ENCODE measurements at regions of chr1 and their contacts with region 1.

Region 1: DNA sequence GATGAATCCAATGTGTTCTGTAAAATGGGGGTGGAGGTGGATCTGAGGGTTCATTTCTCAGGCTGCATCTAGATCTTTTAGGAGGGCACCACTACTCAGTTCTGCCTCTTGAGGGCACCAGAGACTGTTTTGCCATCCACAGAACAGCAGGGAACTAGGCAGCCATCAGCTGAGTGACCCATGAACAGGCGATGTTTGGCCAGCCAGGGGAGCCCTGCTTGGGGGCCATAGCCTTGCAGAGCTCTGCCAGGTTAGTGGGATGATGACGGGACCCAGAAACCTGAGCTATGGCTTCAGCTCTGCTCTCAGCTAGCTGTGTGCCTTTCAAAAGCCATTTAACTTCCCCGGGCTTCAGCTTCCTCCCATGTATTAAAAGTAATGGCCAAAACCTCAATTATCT is 13.4 kb upstream of the NOS1AP start:
- DNase-seq: peak; percentile 67
- ATAC-seq: peak; percentile 93
- H3K4me3 ChIP-seq: no peak overlapping the region
- H3K27ac ChIP-seq: no peak overlapping the region
- H3K4me1 ChIP-seq: peaks cover 3% of the 10 kb centered on the region; the same call in 1 of the 2 replicates
- H3K27me3 ChIP-seq: peaks cover 9% of the 10 kb centered on the region
- CTCF ChIP-seq: peak; percentile 89
- POLR2A ChIP-seq: no peak
- RAD21 ChIP-seq: peak; percentile 90

Region 2: GRCh38 chr1:162258394-162258793 is 202.4 kb after region 1 on chr1:
- CTCF ChIA-PET with region 1: no interaction called
- POLR2A ChIA-PET with region 1: no interaction called
- dilution Hi-C with region 1: no loop called
- in situ Hi-C with region 1: no loop called
- intact Hi-C with region 1: no loop called
- DNase-seq: no peak
- ATAC-seq: no peak
- H3K4me3 ChIP-seq: no peak overlapping the region
- H3K27ac ChIP-seq: no peak overlapping the region
- H3K4me1 ChIP-seq: no peaks in the 10 kb centered on the region
- H3K27me3 ChIP-seq: no peaks in the 10 kb centered on the region; the same call in 1 of the 2 replicates
- CTCF ChIP-seq: no peak
- POLR2A ChIP-seq: no peak
- RAD21 ChIP-seq: no peak

Region 3: DNA sequence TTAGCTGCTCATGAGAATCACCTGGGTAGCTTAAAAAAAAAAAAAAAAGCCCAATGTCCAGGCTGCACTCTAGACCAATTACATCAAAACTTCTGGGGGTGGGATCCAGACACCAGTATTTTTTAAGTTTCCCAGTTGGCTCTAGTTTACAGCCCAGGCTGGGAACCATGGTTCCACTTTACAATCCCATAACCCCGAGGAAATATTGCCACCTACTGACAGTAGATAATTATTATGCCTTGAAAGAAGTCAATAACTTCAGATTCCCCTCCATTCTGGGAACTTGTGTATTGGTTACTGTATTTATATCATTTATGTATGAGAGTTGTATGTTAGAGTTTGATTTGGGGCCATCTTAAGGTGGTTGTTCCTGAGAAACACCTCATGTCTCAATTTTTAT is 220.4 kb after region 1 on chr1:
- CTCF ChIA-PET with region 1: interaction called, 5 read pairs
- POLR2A ChIA-PET with region 1: no interaction called
- dilution Hi-C with region 1: no loop called
- in situ Hi-C with region 1: loop called (anchors 5 kb)
- intact Hi-C with region 1: loop called (anchors 1 kb)
- DNase-seq: peak; percentile 25
- ATAC-seq: peak; percentile 82
- H3K4me3 ChIP-seq: no peak overlapping the region
- H3K27ac ChIP-seq: no peak overlapping the region
- H3K4me1 ChIP-seq: no peaks in the 10 kb centered on the region
- H3K27me3 ChIP-seq: peaks cover 10% of the 10 kb centered on the region
- CTCF ChIP-seq: peak; percentile 55
- POLR2A ChIP-seq: no peak
- RAD21 ChIP-seq: peak; percentile 56

Region 4: GRCh38 chr1:162391790-162392563 is 335.9 kb after region 1 on chr1:
- CTCF ChIA-PET with region 1: interaction called, 18 read pairs
- POLR2A ChIA-PET with region 1: no interaction called
- dilution Hi-C with region 1: no loop called
- in situ Hi-C with region 1: loop called (anchors 5 kb)
- intact Hi-C with region 1: loop called (anchors 1 kb)
- DNase-seq: peak; percentile 58
- ATAC-seq: peak; percentile 93
- H3K4me3 ChIP-seq: no peak overlapping the region
- H3K27ac ChIP-seq: no peak overlapping the region
- H3K4me1 ChIP-seq: no peaks in the 10 kb centered on the region
- H3K27me3 ChIP-seq: peaks cover 27% of the 10 kb centered on the region
- CTCF ChIP-seq: peak; percentile 77
- POLR2A ChIP-seq: no peak
- RAD21 ChIP-seq: peak; percentile 70

Region 5: GRCh38 chr1:162497723-162498500 is 441.9 kb after region 1 on chr1 and contains the start of gene UHMK1:
- CTCF ChIA-PET with region 1: no interaction called
- POLR2A ChIA-PET with region 1: no interaction called
- dilution Hi-C with region 1: no loop called
- in situ Hi-C with region 1: loop called (anchors 5 kb)
- intact Hi-C with region 1: loop called (anchors 2 kb)
- DNase-seq: peak; percentile 87
- ATAC-seq: peak; percentile 95
- H3K4me3 ChIP-seq: peak within 1 kb of the TSS; percentile 98
- H3K27ac ChIP-seq: peak within 1 kb of the TSS; percentile 94
- H3K4me1 ChIP-seq: peaks cover 14% of the 10 kb centered on the region
- H3K27me3 ChIP-seq: peaks cover 3% of the 10 kb centered on the region; the same call in 1 of the 2 replicates
- CTCF ChIP-seq: no peak
- POLR2A ChIP-seq: peak; percentile 78
- RAD21 ChIP-seq: no peak
- total RNA-seq, gene UHMK1: 57.9 and 124 TPM in 2 replicates

Region 6: GRCh38 chr1:162561037-162561616 is 505.1 kb after region 1 on chr1:
- CTCF ChIA-PET with region 1: no interaction called
- POLR2A ChIA-PET with region 1: no interaction called
- dilution Hi-C with region 1: no loop called
- in situ Hi-C with region 1: no loop called
- intact Hi-C with region 1: loop called (anchors 5 kb)
- DNase-seq: peak; percentile 96
- ATAC-seq: peak; percentile 97
- H3K4me3 ChIP-seq: peak overlapping the region; percentile 94
- H3K27ac ChIP-seq: peak overlapping the region; percentile 79
- H3K4me1 ChIP-seq: peaks cover 10% of the 10 kb centered on the region
- H3K27me3 ChIP-seq: no peaks in the 10 kb centered on the region
- CTCF ChIP-seq: no peak
- POLR2A ChIP-seq: peak; percentile 90
- RAD21 ChIP-seq: peak; percentile 5; the same call in 1 of the 2 replicates

Region 7: GRCh38 chr1:162612606-162613400 is 556.8 kb after region 1 on chr1:
- CTCF ChIA-PET with region 1: no interaction called
- POLR2A ChIA-PET with region 1: no interaction called
- dilution Hi-C with region 1: no loop called
- in situ Hi-C with region 1: no loop called
- intact Hi-C with region 1: loop called (anchors 5 kb)
- DNase-seq: peak; percentile 34
- ATAC-seq: peak; percentile 36
- H3K4me3 ChIP-seq: no peak overlapping the region
- H3K27ac ChIP-seq: no peak overlapping the region
- H3K4me1 ChIP-seq: peaks cover 3% of the 10 kb centered on the region; the same call in 1 of the 2 replicates
- H3K27me3 ChIP-seq: no peaks in the 10 kb centered on the region
- CTCF ChIP-seq: no peak
- POLR2A ChIP-seq: no peak; the same call in none of the 2 replicates
- RAD21 ChIP-seq: no peak

Measured in IMR-90 (cell line).